ENCODE measurements at regions of chrX and their contacts with region 1.

Region 1: DNA sequence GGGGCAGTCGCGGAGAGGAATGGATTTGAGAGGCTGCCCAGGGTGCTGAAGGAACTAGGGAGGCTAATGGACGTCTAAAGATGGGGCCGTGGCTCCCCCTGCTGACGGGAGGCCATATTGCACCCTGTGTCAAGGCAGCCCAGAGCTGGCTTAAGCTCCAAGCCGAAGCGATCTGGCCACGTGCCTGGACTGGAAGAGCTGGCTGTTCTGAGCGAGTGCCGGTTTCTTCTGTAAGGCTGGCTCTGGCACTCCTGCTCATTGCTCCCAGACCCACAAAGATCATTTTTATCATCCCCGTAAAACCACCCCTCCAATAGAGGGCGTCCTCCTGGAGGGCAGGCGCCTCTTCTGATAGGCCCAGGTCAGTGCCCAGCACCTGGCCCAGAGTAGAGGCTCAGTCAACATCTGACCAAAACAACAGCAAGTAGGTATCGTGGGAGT is 5.6 kb downstream of the PNCK start:
- DNase-seq: peak; percentile 58 to 77 (median 64)
- H3K4me3 ChIP-seq: no peak overlapping the region
- H3K4me3 Mint-ChIP-seq: peak overlapping the region in 6 of 7 donors; percentile 52 to 79 (median 69)
- H3K27ac ChIP-seq: no peak overlapping the region
- H3K27ac Mint-ChIP-seq: peak overlapping the region in 3 of 8 donors; percentile 29 to 52 (median 29)
- H3K4me1 ChIP-seq: no peaks in the 10 kb centered on the region
- H3K4me1 Mint-ChIP-seq: peaks cover 7 to 9% (median 8%) of the 10 kb centered on the region in 3 donors
- H3K27me3 ChIP-seq: no peaks in the 10 kb centered on the region
- H3K27me3 Mint-ChIP-seq: peaks cover 7 to 13% of the 10 kb centered on the region in 2 donors

Region 2: GRCh38 chrX:152941328-152942106 is 726.5 kb before region 1 on chrX:
- CTCF ChIA-PET with region 1: interaction called, 19 read pairs
- POLR2A ChIA-PET with region 1: no interaction called
- DNase-seq: peak; percentile 82 to 93 (median 89)
- H3K4me3 ChIP-seq: peak overlapping the region; percentile 59
- H3K4me3 Mint-ChIP-seq: peak overlapping the region; percentile 76 to 89 (median 85)
- H3K27ac ChIP-seq: peak overlapping the region; percentile 9
- H3K27ac Mint-ChIP-seq: peak overlapping the region; percentile 64 to 88 (median 84)
- H3K4me1 ChIP-seq: peaks cover 8% of the 10 kb centered on the region
- H3K4me1 Mint-ChIP-seq: peaks cover 6 to 9% (median 9%) of the 10 kb centered on the region in 3 donors
- H3K27me3 ChIP-seq: no peaks in the 10 kb centered on the region
- H3K27me3 Mint-ChIP-seq: peaks cover 0 to 4% of the 10 kb centered on the region in 2 donors

Region 3: GRCh38 chrX:153456161-153456560 is 211.8 kb before region 1 on chrX:
- CTCF ChIA-PET with region 1: no interaction called
- POLR2A ChIA-PET with region 1: no interaction called
- DNase-seq: no peak
- H3K4me3 ChIP-seq: no peak overlapping the region
- H3K4me3 Mint-ChIP-seq: no peak overlapping the region
- H3K27ac ChIP-seq: no peak overlapping the region
- H3K27ac Mint-ChIP-seq: no peak overlapping the region
- H3K4me1 ChIP-seq: no peaks in the 10 kb centered on the region
- H3K4me1 Mint-ChIP-seq: no peaks in the 10 kb centered on the region
- H3K27me3 ChIP-seq: no peaks in the 10 kb centered on the region
- H3K27me3 Mint-ChIP-seq: peaks cover 0 to 1% of the 10 kb centered on the region in 2 donors

Region 4: DNA sequence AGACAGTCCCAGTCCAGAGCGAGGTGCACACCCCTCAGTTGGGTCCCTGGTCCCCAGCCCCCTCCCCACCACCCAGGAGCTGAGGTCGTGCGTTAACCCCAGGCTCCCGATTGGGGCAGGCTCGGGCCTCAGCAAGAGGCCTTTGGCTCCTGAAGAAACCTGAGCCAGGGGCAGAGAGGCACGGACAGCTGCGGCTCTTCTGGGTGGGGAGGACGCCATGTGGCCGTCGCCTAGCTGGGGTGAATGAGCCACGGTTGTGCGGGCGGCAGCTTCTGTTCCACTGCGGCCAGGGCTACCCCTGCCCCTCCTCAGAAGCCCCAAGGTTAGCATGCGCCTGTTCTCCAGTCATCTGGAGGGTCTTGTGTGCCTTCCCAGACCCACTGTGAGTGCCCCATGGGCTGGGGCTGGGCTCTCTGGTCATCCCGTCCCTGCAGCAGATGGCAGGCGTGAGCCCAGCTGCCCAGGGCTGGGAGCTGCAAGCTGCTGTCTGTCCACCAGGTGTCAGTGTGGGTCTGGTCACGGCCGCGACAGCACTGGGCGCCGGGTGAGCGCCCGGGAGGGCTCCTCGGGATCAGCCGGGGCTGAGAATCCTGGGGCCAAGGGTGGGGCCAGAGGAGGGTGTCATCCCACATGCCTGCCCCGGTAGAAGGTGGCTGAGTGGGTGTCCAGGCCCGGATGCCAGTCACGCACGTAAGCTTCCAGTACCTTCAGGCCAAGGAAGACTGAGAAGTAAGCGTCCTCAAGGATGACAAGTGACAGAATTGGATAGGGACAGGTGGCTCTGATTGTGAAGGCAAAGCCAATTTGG is 128.6 kb before region 1 on chrX:
- CTCF ChIA-PET with region 1: interaction called, 59 read pairs
- POLR2A ChIA-PET with region 1: no interaction called
- DNase-seq: peak; percentile 31 to 60 (median 41)
- H3K4me3 ChIP-seq: no peak overlapping the region
- H3K4me3 Mint-ChIP-seq: no peak overlapping the region
- H3K27ac ChIP-seq: no peak overlapping the region
- H3K27ac Mint-ChIP-seq: no peak overlapping the region
- H3K4me1 ChIP-seq: no peaks in the 10 kb centered on the region
- H3K4me1 Mint-ChIP-seq: no peaks in the 10 kb centered on the region
- H3K27me3 ChIP-seq: no peaks in the 10 kb centered on the region
- H3K27me3 Mint-ChIP-seq: peaks cover 0 to 12% of the 10 kb centered on the region in 2 donors

Region 5: DNA sequence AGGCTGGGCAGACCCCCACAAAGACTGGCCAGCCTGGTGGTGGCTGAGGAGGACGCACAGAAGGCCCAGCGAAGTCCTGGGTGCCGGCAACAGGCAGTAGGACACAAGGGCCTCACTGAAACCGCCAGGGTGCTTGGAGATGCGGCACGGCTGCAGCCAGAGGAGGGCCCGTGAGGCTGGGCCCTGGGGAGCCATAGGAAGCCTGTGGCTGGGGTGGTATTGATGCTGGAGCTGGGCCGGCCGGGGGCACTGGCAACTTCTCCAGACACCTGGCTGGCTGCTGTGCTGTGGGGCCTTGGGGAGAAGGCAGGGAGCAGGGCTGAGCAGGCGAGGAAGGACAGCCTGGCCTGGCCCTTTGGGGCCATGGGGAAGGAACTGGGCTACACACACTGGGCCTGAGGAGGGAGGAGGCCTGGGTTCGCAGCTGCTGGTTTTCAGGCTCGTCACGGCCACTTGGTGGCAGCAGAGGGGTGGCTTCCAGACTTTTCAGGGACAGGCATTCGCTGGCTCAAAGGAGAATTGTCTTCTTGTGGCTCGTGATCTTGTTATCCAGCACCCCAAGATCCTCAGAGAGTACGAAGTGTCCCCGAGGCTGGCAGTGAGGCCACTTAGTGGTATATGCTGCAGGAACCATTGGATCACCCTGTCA is 113.3 kb before region 1 on chrX:
- CTCF ChIA-PET with region 1: interaction called, 10 read pairs
- POLR2A ChIA-PET with region 1: no interaction called
- DNase-seq: peak; percentile 27 to 67 (median 29)
- H3K4me3 ChIP-seq: no peak overlapping the region
- H3K4me3 Mint-ChIP-seq: no peak overlapping the region
- H3K27ac ChIP-seq: no peak overlapping the region
- H3K27ac Mint-ChIP-seq: no peak overlapping the region
- H3K4me1 ChIP-seq: no peaks in the 10 kb centered on the region
- H3K4me1 Mint-ChIP-seq: no peaks in the 10 kb centered on the region
- H3K27me3 ChIP-seq: no peaks in the 10 kb centered on the region
- H3K27me3 Mint-ChIP-seq: peaks cover 0 to 2% of the 10 kb centered on the region in 2 donors

Region 6: DNA sequence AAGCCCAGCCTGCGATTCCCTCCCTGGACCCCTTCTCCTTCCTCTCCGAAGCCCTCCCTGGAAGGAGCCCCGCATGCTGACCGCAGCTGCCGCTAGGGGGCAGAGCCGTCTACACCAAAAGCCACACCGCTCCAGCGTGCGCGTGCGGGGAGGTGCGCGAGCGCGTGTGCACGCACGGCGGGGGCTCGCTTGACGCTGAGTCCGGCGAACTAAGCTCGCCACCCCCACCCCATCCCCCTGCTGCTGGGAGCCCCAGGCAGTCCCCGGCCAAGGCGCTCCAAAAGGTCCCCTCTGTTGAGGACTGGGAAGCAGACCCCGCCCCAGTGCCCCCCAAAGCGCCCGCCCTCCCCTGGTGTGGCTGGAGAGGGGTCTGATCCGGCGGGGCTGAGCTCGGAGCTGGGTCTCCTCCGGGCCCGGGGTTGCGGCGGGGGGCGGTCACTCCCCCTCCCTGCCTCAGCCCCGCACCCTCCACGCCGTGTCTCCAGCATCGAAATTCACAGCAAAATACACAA is 58.0 kb before region 1 on chrX:
- CTCF ChIA-PET with region 1: interaction called, 15 read pairs
- POLR2A ChIA-PET with region 1: no interaction called
- DNase-seq: peak; percentile 63 to 83 (median 71)
- H3K4me3 ChIP-seq: peak overlapping the region; percentile 50
- H3K4me3 Mint-ChIP-seq: peak overlapping the region; percentile 74 to 92 (median 80)
- H3K27ac ChIP-seq: no peak overlapping the region
- H3K27ac Mint-ChIP-seq: peak overlapping the region in 4 of 8 donors; percentile 50 to 92 (median 79)
- H3K4me1 ChIP-seq: no peaks in the 10 kb centered on the region
- H3K4me1 Mint-ChIP-seq: peaks cover 6 to 12% (median 7%) of the 10 kb centered on the region in 3 donors
- H3K27me3 ChIP-seq: no peaks in the 10 kb centered on the region
- H3K27me3 Mint-ChIP-seq: peaks cover 0 to 18% of the 10 kb centered on the region in 2 donors

Region 7: GRCh38 chrX:153657161-153657560 is 10.8 kb before region 1 on chrX:
- CTCF ChIA-PET with region 1: interaction called, 24 read pairs
- POLR2A ChIA-PET with region 1: no interaction called
- DNase-seq: no peak
- H3K4me3 ChIP-seq: no peak overlapping the region
- H3K4me3 Mint-ChIP-seq: no peak overlapping the region
- H3K27ac ChIP-seq: no peak overlapping the region
- H3K27ac Mint-ChIP-seq: no peak overlapping the region
- H3K4me1 ChIP-seq: no peaks in the 10 kb centered on the region
- H3K4me1 Mint-ChIP-seq: peaks cover 0 to 4% (median 2%) of the 10 kb centered on the region in 3 donors
- H3K27me3 ChIP-seq: no peaks in the 10 kb centered on the region
- H3K27me3 Mint-ChIP-seq: peaks cover 16 to 22% of the 10 kb centered on the region in 2 donors

Measured in CD8-positive, alpha-beta memory T cell (primary cell).